ENCODE measurements at regions of chr6 and their contacts with region 1.

Region 1: DNA sequence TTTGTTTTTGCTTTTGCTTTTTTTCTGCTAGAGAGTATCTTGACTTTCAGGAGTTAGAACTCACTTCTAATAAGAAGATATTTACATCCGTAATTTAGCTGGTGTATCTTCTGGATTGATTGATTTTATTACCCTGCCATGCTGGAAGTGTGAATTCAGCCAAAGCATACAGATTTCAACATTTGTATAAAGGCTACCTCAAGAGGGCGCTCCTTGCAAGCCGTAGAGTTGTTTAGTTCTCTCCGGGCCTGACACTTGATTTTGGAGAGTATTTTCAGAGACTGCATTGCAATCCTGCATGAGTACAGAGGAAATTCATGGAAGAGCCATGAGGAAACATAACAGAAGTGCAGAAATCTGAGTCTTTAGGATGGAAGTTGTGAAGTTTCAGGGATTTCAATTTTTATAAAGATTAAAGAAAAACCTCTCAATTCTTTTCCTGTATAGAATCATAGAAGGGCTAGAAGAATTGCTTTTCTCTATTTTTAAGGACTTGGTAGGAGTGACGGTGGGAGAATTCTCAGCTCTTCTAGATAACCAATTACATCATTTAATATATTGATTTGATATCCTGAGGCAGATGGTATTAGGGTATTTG is 66.7 kb upstream of the TIAM2 start:
- DNase-seq: peak; percentile 76
- ATAC-seq: peak; percentile 21; the same call in 1 of the 2 replicates
- H3K4me3 ChIP-seq: no peak overlapping the region
- H3K27ac ChIP-seq: no peak overlapping the region
- H3K4me1 ChIP-seq: peaks cover 19% of the 10 kb centered on the region
- H3K27me3 ChIP-seq: no peaks in the 10 kb centered on the region
- CTCF ChIP-seq: peak; percentile 81

Region 2: DNA sequence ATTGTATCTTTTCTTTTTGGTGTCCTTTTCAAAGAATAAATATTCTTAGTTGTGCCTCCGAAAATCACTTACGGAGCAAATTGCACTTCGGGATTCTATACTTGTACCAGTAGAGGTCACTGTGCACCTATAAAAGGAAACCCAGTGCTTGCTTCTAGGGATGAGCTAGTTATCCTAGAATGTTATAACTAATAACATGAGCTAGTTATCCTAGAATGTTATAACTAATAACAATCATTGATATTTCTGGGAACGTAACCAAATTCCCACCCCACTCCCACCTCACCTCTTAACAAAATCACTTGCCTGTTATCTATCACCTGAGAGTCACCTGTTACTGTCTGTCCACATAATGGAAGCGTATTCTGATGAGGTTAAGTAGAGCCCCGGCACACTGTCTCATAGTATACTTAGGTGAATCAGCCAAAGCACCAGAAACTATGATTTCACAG is 60.3 kb before region 1 on chr6:
- CTCF ChIA-PET with region 1: interaction called, 6 read pairs
- POLR2A ChIA-PET with region 1: no interaction called
- intact Hi-C with region 1: loop called (anchors 1 kb)
- DNase-seq: peak; percentile 66
- ATAC-seq: no peak
- H3K4me3 ChIP-seq: no peak overlapping the region
- H3K27ac ChIP-seq: no peak overlapping the region
- H3K4me1 ChIP-seq: peaks cover 9% of the 10 kb centered on the region; the same call in 1 of the 2 replicates
- H3K27me3 ChIP-seq: no peaks in the 10 kb centered on the region
- CTCF ChIP-seq: peak; percentile 78

Region 3: GRCh38 chr6:155158030-155158843 is 229.8 kb after region 1 on chr6:
- CTCF ChIA-PET with region 1: interaction called, 3 read pairs
- POLR2A ChIA-PET with region 1: no interaction called
- intact Hi-C with region 1: loop called (anchors 1 kb)
- DNase-seq: peak; percentile 73
- ATAC-seq: peak; percentile 44
- H3K4me3 ChIP-seq: no peak overlapping the region
- H3K27ac ChIP-seq: peak overlapping the region; percentile 65
- H3K4me1 ChIP-seq: peaks cover 45% of the 10 kb centered on the region
- H3K27me3 ChIP-seq: no peaks in the 10 kb centered on the region
- CTCF ChIP-seq: no peak

Region 4: DNA sequence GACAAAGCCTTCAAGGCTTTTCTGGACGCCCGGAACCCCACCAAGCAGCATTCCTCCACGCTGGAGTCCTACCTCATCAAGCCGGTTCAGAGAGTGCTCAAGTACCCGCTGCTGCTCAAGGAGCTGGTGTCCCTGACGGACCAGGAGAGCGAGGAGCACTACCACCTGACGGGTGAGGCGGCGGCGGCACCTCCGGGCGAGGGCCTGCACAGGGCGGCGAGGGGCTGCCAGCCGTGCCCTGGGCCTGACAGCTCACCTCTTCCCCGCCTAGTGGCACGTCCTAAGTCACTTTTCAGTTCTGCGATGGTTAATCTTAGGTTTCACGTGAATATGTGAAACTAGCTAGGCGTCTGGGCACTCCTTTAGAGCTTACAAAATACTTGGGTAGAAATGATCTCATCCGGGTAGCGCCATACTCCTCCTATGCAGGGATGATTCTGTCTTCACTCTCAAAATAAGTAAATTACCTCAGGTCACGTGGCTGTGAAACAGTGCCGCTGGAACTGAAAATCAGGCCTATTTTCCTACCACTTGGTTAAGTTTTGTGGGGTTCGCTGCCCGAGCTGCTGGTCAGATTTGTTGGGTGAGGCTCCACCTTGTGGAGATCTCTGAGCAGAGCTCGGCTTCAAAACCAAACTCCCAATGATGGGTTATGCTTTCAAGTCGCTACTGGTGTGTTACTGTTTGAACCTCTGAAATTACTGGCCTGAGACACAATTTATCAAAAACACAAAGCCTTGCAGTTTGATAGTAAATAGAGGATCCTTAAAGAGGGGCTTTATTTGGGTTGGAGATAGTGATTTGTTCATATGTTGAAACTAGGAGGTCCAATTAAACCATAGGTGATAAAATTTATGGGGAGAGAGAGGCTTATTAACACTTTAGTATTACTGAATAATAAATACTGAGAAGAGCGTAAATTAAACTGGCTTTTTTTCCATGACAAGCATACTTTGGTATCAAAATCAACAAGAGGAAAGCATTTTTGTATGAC is 319.9 kb after region 1 on chr6:
- CTCF ChIA-PET with region 1: no interaction called
- POLR2A ChIA-PET with region 1: no interaction called
- intact Hi-C with region 1: loop called (anchors 1 kb)
- DNase-seq: peak; percentile 32
- ATAC-seq: peak; percentile 35; the same call in 1 of the 2 replicates
- H3K4me3 ChIP-seq: no peak overlapping the region
- H3K27ac ChIP-seq: no peak overlapping the region
- H3K4me1 ChIP-seq: peaks cover 1% of the 10 kb centered on the region
- H3K27me3 ChIP-seq: no peaks in the 10 kb centered on the region
- CTCF ChIP-seq: peak; percentile 75